Calu3 (cell line): ENCODE measurements at regions of chr7 and their contacts with region 1.

Region 1: GRCh38 chr7:72481934-72482333 is 69.8 kb upstream of the CALN1 start:
- DNase-seq: no peak
- H3K4me3 Mint-ChIP-seq: no peak overlapping the region
- H3K27ac Mint-ChIP-seq: no peak overlapping the region
- H3K4me1 Mint-ChIP-seq: peaks cover 18% of the 10 kb centered on the region
- H3K27me3 Mint-ChIP-seq: no peaks in the 10 kb centered on the region
- CTCF ChIP-seq: no peak

Region 2: DNA sequence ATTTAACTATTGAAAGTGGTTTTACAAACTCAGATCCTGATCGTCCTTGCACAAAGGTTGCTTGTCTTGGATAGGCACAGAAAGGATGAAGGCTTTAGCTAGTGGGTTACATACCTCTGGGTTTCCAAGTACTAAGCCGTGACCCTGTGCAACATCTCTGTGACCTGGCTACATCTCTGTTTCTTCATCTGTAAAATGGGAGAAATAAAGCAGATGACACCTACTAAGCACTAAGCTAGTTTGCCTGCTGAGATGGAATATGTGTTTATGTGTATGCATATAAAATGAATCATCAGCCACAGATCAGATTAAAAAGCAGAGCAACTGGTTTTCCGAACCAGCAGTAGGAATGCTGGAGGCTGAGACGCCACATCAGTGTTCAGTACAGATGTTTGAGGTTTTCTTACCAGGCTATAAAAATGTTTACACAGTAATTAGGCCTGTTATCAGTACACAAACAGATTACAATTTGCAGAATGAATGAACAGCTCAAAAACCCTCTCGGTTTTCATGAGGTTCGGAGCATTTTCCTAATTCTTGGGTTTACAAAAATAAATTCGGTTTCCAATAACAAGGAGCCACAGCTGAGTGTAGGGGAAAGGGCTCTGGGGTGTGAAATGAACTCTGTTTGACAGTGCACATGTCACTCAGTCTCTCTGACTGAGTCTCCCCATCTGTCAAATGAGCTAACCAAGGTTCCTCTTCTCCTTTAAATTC is 155.6 kb before region 1 on chr7:
- CTCF ChIA-PET with region 1: no interaction called
- intact Hi-C with region 1: loop called (anchors 5 kb)
- DNase-seq: peak; percentile 21
- H3K4me3 Mint-ChIP-seq: no peak overlapping the region
- H3K27ac Mint-ChIP-seq: no peak overlapping the region
- H3K4me1 Mint-ChIP-seq: no peaks in the 10 kb centered on the region
- H3K27me3 Mint-ChIP-seq: no peaks in the 10 kb centered on the region
- CTCF ChIP-seq: no peak

Region 3: GRCh38 chr7:72391821-72392377 is 90.0 kb before region 1 on chr7:
- CTCF ChIA-PET with region 1: no interaction called
- intact Hi-C with region 1: no loop called
- DNase-seq: no peak
- H3K4me3 Mint-ChIP-seq: no peak overlapping the region
- H3K27ac Mint-ChIP-seq: no peak overlapping the region
- H3K4me1 Mint-ChIP-seq: no peaks in the 10 kb centered on the region
- H3K27me3 Mint-ChIP-seq: peaks cover 13% of the 10 kb centered on the region
- CTCF ChIP-seq: no peak